GM12878 (cell line): ENCODE measurements at regions of chr19 and their contacts with region 1.

Region 1: GRCh38 chr19:16185123-16185767 is at the start of gene FAM32A:
- DNase-seq: peak; percentile 98
- ATAC-seq: peak; percentile 94
- H3K4me3 ChIP-seq: peak within 1 kb of the TSS; percentile 82
- H3K27ac ChIP-seq: peak within 1 kb of the TSS; percentile 70
- H3K4me1 ChIP-seq: peaks cover 2% of the 10 kb centered on the region; the same call in 1 of the 2 replicates
- H3K27me3 ChIP-seq: no peaks in the 10 kb centered on the region
- CTCF ChIP-seq: no peak
- EP300 ChIP-seq: no peak
- POLR2A ChIP-seq: peak; percentile 93
- RAD21 ChIP-seq: no peak
- polyA plus RNA-seq, gene FAM32A: 33.3 to 43.0 TPM

Region 2: DNA sequence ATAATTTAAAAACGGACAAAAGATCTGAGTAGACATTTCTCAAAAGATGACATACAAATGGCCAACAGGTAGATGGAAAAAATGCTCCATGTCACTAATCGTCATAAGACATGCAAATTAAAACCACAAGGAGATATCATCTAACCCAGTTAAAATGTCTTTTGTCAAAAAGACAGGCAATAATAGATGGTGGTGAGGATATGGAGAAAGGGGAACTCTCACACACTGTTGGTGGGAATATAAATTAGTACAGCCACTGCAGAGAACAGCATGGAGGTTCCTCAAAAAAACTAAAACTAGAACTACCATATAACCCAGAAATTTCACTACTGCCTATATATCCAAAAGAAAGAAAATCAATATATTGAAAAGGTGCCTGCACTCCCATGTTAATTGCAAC is 198.5 kb before region 1 on chr19:
- CTCF ChIA-PET with region 1: no interaction called
- POLR2A ChIA-PET with region 1: no interaction called
- RAD21 ChIA-PET with region 1: no interaction called
- SMC1A ChIA-PET with region 1: no interaction called
- in situ Hi-C with region 1: no loop called
- intact Hi-C with region 1: no loop called
- DNase-seq: no peak
- ATAC-seq: no peak
- H3K4me3 ChIP-seq: no peak overlapping the region
- H3K27ac ChIP-seq: no peak overlapping the region
- H3K4me1 ChIP-seq: no peaks in the 10 kb centered on the region
- H3K27me3 ChIP-seq: no peaks in the 10 kb centered on the region
- CTCF ChIP-seq: no peak
- EP300 ChIP-seq: no peak
- POLR2A ChIP-seq: no peak
- RAD21 ChIP-seq: no peak

Region 3: DNA sequence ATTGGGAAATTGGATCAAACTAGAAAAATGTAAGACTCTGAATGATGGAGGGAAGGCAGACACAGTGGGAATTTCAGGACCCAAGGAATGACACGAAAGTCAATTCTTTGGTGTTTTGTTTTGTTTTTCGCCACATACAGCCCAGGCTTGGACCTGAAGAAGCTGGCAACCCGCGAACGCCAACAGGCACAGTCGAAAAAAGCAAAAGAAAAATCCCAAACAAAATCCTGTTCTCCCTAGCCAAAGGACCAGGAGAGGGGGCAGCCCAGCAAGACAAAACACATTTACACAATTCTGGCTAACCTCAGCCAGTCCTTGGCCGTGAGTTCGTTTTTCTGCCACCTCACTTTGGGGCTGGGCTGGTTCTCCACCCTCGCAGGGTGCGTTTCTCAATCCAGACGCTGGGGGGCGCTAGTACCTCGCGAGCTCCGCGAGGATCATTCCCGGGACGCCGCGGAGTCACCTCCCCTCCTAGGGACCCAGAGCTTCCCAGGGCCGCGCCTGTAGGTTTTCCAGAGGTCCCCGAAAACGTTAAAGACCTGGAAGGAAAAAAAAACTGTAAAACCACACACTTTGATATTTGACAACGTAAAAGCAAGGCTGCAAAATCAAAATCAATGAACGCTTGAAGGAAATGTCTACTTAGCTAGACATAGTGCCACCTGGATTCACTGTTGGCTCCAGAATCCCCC is 143.8 kb before region 1 on chr19:
- CTCF ChIA-PET with region 1: interaction called, 61 read pairs
- POLR2A ChIA-PET with region 1: interaction called, 7 read pairs
- RAD21 ChIA-PET with region 1: interaction called, 33 read pairs
- SMC1A ChIA-PET with region 1: interaction called, 34 read pairs
- in situ Hi-C with region 1: loop called (anchors 5 kb)
- intact Hi-C with region 1: loop called (anchors 1 kb)
- DNase-seq: no peak
- ATAC-seq: peak; percentile 91
- H3K4me3 ChIP-seq: no peak overlapping the region
- H3K27ac ChIP-seq: no peak overlapping the region
- H3K4me1 ChIP-seq: no peaks in the 10 kb centered on the region
- H3K27me3 ChIP-seq: no peaks in the 10 kb centered on the region
- CTCF ChIP-seq: peak; percentile 92 to 93 (median 92)
- EP300 ChIP-seq: no peak
- POLR2A ChIP-seq: no peak
- RAD21 ChIP-seq: peak; percentile 88

Region 4: DNA sequence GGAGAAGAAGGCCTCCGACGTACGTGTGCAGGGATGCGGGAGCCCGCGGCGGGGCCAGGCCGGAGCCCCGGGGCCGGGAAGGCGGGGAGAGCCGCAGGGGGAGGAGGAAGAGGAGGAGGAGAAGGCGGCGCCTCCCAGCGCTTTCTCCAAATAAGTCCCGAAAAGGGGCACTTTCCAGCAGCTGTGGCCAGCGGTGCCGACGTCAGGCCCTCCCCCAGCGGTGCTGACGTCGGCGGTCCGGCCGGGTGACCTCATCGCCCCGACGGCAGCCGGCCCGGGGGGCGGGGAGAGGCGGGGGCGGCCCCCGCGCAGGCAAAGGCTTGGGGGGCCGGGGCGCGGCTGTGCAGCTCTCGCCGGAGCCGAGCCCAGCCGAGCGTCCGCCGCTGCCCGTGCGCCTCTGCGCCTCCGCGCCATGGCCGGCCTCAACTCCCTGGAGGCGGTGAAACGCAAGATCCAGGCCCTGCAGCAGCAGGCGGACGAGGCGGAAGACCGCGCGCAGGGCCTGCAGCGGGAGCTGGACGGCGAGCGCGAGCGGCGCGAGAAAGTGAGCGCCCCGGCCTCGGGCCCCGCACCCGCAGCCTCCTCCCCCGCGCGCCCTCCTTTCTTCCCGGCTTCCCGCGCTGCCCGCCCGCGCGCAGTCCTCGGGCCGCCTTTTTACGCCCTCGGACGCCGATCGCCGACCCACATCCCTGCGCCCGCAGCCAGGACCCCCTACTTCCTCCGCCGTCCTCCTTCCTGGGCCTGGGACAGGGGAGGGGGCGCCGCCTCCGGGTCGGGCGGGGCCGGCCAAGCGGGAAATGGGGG is 108.9 kb before region 1 on chr19 and contains the start of gene TPM4:
- CTCF ChIA-PET with region 1: interaction called, 10 read pairs
- POLR2A ChIA-PET with region 1: interaction called, 6 read pairs
- RAD21 ChIA-PET with region 1: interaction called, 7 read pairs
- SMC1A ChIA-PET with region 1: interaction called, 13 read pairs
- in situ Hi-C with region 1: no loop called
- intact Hi-C with region 1: no loop called
- DNase-seq: peak; percentile 74
- ATAC-seq: peak; percentile 66
- H3K4me3 ChIP-seq: peak within 1 kb of the TSS; percentile 92
- H3K27ac ChIP-seq: peak within 1 kb of the TSS; percentile 99
- H3K4me1 ChIP-seq: peaks cover 17% of the 10 kb centered on the region
- H3K27me3 ChIP-seq: no peaks in the 10 kb centered on the region
- CTCF ChIP-seq: no peak
- EP300 ChIP-seq: peak in 1 of 2 experiments; percentile 26; a peak in 2 of 4 replicates
- POLR2A ChIP-seq: peak; percentile 92
- RAD21 ChIP-seq: no peak
- polyA plus RNA-seq, gene TPM4: 183 to 194 TPM

Region 5: GRCh38 chr19:16143399-16144245 is 41.6 kb before region 1 on chr19 and contains the start of gene HSH2D:
- CTCF ChIA-PET with region 1: interaction called, 8 read pairs
- POLR2A ChIA-PET with region 1: interaction called, 7 read pairs
- RAD21 ChIA-PET with region 1: interaction called, 27 read pairs
- SMC1A ChIA-PET with region 1: interaction called, 12 read pairs
- in situ Hi-C with region 1: no loop called
- intact Hi-C with region 1: loop called (anchors 2 kb)
- DNase-seq: peak; percentile 90
- ATAC-seq: peak; percentile 70
- H3K4me3 ChIP-seq: peak within 1 kb of the TSS; percentile 92
- H3K27ac ChIP-seq: peak within 1 kb of the TSS; percentile 99
- H3K4me1 ChIP-seq: peaks cover 37% of the 10 kb centered on the region
- H3K27me3 ChIP-seq: no peaks in the 10 kb centered on the region
- CTCF ChIP-seq: no peak
- EP300 ChIP-seq: peak in 1 of 2 experiments; percentile 81; a peak in 1 of 4 replicates
- POLR2A ChIP-seq: peak; percentile 97
- RAD21 ChIP-seq: no peak
- polyA plus RNA-seq, gene HSH2D: 22.0 to 27.2 TPM